ENCODE measurements at regions of chr1 and their contacts with region 1.

Region 1: GRCh38 chr1:214602764-214603657 is at the start of gene CENPF:
- DNase-seq: peak; percentile 100
- H3K4me3 Mint-ChIP-seq: peak within 1 kb of the TSS; percentile 96
- H3K27ac Mint-ChIP-seq: peak within 1 kb of the TSS; percentile 94
- H3K4me1 Mint-ChIP-seq: peaks cover 16% of the 10 kb centered on the region
- H3K27me3 Mint-ChIP-seq: no peaks in the 10 kb centered on the region
- CTCF ChIP-seq: peak; percentile 28
- total RNA-seq, gene CENPF: 88.8 and 135 TPM in 2 replicates

Region 2: DNA sequence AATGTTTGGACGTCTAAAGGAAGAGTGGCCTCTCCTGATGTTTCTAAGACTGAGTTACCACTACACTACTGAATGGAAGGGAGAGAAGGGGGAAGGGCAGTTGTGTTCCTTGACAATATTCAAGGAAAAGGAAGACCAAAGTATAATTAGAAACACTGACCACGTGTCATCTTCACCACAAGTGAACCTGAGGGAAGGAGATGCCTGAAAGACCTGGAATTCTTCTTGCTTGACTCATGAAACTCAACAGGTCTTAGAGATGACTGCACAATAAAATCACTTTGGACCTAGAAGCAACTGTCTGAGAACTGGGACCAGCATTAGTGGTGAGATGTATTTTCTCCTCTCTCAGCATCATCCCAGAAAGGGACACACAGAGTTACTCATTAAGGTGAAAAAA is 108.3 kb before region 1 on chr1:
- CTCF ChIA-PET with region 1: no interaction called
- POLR2A ChIA-PET with region 1: no interaction called
- intact Hi-C with region 1: no loop called
- DNase-seq: peak; percentile 52
- H3K4me3 Mint-ChIP-seq: no peak overlapping the region
- H3K27ac Mint-ChIP-seq: peak overlapping the region; percentile 18
- H3K4me1 Mint-ChIP-seq: peaks cover 50% of the 10 kb centered on the region
- H3K27me3 Mint-ChIP-seq: no peaks in the 10 kb centered on the region
- CTCF ChIP-seq: no peak

Region 3: GRCh38 chr1:214590696-214591095 is 12.3 kb before region 1 on chr1:
- CTCF ChIA-PET with region 1: interaction called, 34 read pairs
- POLR2A ChIA-PET with region 1: interaction called, 40 read pairs
- intact Hi-C with region 1: no loop called
- DNase-seq: no peak
- H3K4me3 Mint-ChIP-seq: no peak overlapping the region
- H3K27ac Mint-ChIP-seq: no peak overlapping the region
- H3K4me1 Mint-ChIP-seq: no peaks in the 10 kb centered on the region
- H3K27me3 Mint-ChIP-seq: no peaks in the 10 kb centered on the region
- CTCF ChIP-seq: peak; percentile 33

Region 4: GRCh38 chr1:214615871-214616270 is 12.9 kb after region 1 on chr1:
- CTCF ChIA-PET with region 1: interaction called, 196 read pairs
- POLR2A ChIA-PET with region 1: interaction called, 37 read pairs
- intact Hi-C with region 1: no loop called
- DNase-seq: no peak
- H3K4me3 Mint-ChIP-seq: no peak overlapping the region
- H3K27ac Mint-ChIP-seq: peak overlapping the region; percentile 84
- H3K4me1 Mint-ChIP-seq: peaks cover 38% of the 10 kb centered on the region
- H3K27me3 Mint-ChIP-seq: no peaks in the 10 kb centered on the region
- CTCF ChIP-seq: no peak

Region 5: DNA sequence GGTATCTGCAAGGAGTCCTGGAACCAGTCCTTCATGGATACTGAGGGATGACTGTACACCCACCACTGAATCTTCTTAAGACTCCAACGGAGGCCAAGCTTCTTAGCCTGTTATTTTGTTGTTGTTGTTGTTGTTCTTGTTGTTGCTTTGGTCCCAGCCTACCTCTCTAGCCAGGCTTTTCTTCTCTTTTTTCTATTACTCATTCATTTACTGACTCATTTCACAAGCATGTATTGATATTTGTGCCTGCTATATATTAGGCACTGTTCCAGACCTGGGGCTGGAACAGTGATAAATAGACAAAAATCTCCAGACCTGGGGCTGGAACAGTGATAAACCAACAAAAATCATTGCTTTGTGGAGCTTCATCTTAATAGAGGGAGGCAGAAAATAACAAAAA is 20.4 kb after region 1 on chr1:
- CTCF ChIA-PET with region 1: interaction called, 196 read pairs
- POLR2A ChIA-PET with region 1: interaction called, 10 read pairs
- intact Hi-C with region 1: no loop called
- DNase-seq: peak; percentile 42
- H3K4me3 Mint-ChIP-seq: no peak overlapping the region
- H3K27ac Mint-ChIP-seq: peak overlapping the region; percentile 36
- H3K4me1 Mint-ChIP-seq: peaks cover 11% of the 10 kb centered on the region
- H3K27me3 Mint-ChIP-seq: no peaks in the 10 kb centered on the region
- CTCF ChIP-seq: no peak